ENCODE measurements at regions of chr7 and their contacts with region 1.

Region 1: DNA sequence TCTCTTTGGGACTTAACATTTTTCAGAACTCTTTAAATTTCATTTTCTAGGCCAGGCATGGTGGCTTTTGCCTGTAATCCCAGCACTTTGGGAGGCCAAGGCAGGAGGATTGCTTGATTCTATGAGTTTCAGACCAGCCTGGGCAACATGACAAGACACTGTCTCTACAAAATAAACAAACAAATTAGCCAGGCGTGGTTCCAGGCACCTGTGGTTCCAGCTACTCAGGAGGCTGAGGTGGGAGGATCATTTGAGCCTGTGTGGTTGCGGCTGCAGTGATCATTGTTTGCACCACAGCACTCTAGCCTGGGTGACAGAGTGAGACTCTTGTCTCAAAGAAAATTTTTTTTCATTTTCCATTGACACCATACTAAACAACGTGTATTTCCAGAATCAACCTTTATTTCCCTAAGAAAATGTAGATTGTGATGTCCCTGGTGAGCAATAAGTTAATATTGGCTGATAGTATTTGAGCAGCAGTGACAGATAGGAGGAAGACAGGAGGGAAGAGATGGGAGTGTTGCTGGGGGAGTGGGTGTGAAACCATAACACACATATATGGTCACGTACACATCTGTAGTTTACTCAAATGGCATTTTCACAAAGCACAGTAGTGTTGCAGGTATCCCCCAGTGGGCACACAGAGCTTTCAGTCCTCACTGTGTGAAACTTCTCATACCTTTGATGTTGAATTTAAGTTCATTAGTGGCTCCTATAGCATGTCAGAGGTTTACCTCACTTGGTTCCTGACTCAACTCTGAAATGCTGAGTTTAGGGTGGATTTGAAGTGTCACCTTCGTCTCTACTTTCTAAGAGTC is 205.6 kb downstream of the AUTS2 start:
- DNase-seq: peak; percentile 76
- H3K4me3 ChIP-seq: peak overlapping the region; percentile 33
- H3K27ac ChIP-seq: peak overlapping the region; percentile 73
- H3K4me1 ChIP-seq: peaks cover 84% of the 10 kb centered on the region
- CTCF ChIP-seq: no peak

Region 2: DNA sequence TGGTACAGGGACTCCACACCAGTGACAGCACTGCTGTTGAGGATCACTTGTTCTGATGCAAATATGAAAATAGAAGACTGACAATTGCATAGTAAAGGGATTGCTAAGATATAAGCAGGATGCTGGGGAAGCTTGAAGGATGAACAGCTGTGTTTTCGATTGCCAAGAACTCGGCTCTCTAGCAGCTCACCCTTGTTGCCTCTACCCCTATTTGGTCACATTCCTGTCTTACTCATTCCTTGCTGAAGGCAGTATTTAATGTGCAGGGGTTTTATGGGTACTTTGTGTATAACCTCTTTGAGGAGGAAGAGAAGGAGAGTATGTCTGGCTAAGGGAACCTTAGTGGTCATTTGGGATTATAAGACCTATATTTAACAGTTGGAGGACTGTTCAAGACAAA is 13.2 kb after region 1 on chr7:
- CTCF ChIA-PET with region 1: interaction called, 4 read pairs
- POLR2A ChIA-PET with region 1: interaction called, 60 read pairs
- intact Hi-C with region 1: no loop called
- DNase-seq: no peak
- H3K4me3 ChIP-seq: no peak overlapping the region
- H3K27ac ChIP-seq: no peak overlapping the region
- H3K4me1 ChIP-seq: peaks cover 76% of the 10 kb centered on the region
- CTCF ChIP-seq: no peak

Region 3: DNA sequence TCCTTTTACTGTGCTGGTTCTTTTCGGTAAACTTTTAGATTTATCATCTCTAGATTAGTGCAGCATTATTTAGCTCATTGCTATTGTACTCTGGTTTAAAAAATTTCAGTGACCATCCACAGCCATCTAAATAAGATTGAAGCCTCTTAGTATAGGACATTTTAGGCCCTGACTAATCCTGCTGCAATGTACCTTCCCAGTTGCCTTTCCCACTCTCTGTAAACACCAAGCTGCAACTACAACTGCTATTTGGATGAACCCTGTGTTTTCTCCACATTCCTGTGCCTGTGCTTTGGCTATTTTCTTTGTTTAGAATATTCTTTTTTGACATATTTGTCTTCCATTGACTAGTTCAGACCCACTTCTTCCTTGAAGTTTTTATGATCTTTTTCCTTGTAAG is 108.9 kb after region 1 on chr7:
- CTCF ChIA-PET with region 1: no interaction called
- POLR2A ChIA-PET with region 1: interaction called, 11 read pairs
- intact Hi-C with region 1: no loop called
- DNase-seq: no peak
- H3K4me3 ChIP-seq: no peak overlapping the region
- H3K27ac ChIP-seq: no peak overlapping the region
- H3K4me1 ChIP-seq: no peaks in the 10 kb centered on the region
- CTCF ChIP-seq: no peak

Measured in OCI-LY7 (cell line).